ENCODE measurements at regions of chr15 and their contacts with region 1.

Region 1: GRCh38 chr15:57561041-57561711 is 30.5 kb upstream of the MYZAP start:
- DNase-seq: peak in 1 of 2 donors; percentile 70
- ATAC-seq: peak; percentile 93
- H3K4me3 ChIP-seq: no peak overlapping the region
- H3K27ac ChIP-seq: no peak overlapping the region
- H3K4me1 ChIP-seq: no peaks in the 10 kb centered on the region
- H3K27me3 ChIP-seq: no peaks in the 10 kb centered on the region

Region 2: DNA sequence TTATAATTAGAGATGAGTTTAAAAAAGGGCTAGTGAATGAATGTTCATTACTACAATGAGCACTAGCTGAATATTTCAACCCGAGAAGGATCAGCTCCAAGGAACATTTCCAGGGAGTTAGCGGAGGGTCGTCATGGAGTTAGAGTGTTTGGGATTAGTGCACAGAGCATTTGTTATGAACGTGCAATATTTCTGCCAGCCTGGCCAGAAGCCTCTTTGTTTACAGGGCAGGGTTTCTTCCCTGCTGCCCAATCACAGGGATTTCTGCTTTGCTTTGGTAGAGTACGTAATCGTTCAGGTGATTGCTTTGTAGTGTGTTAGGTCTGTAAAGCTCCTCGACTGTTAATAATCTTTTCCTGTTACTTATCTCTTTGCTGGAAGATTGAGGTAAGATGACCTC is 179.0 kb before region 1 on chr15:
- intact Hi-C with region 1: no loop called
- DNase-seq: no peak
- ATAC-seq: no peak
- H3K4me3 ChIP-seq: no peak overlapping the region
- H3K27ac ChIP-seq: no peak overlapping the region
- H3K4me1 ChIP-seq: peaks cover 0 to 2% of the 10 kb centered on the region in 2 donors
- H3K27me3 ChIP-seq: no peaks in the 10 kb centered on the region

Region 3: GRCh38 chr15:57611938-57612337 is 50.8 kb after region 1 on chr15:
- intact Hi-C with region 1: loop called in 1 of 2 experiments (anchors 1 kb)
- DNase-seq: peak in 1 of 2 donors; percentile 53
- ATAC-seq: peak; percentile 67
- H3K4me3 ChIP-seq: no peak overlapping the region
- H3K27ac ChIP-seq: peak overlapping the region in 1 of 2 donors; percentile 6
- H3K4me1 ChIP-seq: no peaks in the 10 kb centered on the region
- H3K27me3 ChIP-seq: no peaks in the 10 kb centered on the region

Region 4: GRCh38 chr15:57635300-57635909 is 74.2 kb after region 1 on chr15:
- intact Hi-C with region 1: loop called (anchors 2 kb)
- DNase-seq: no peak
- ATAC-seq: peak; percentile 61
- H3K4me3 ChIP-seq: no peak overlapping the region
- H3K27ac ChIP-seq: peak overlapping the region; percentile 34 to 50
- H3K4me1 ChIP-seq: peaks cover 0 to 3% of the 10 kb centered on the region in 2 donors
- H3K27me3 ChIP-seq: no peaks in the 10 kb centered on the region

Region 5: GRCh38 chr15:57732526-57733331 is 171.6 kb after region 1 on chr15:
- intact Hi-C with region 1: loop called in 1 of 2 experiments (anchors 10 kb)
- DNase-seq: no peak
- ATAC-seq: no peak
- H3K4me3 ChIP-seq: no peak overlapping the region
- H3K27ac ChIP-seq: no peak overlapping the region
- H3K4me1 ChIP-seq: no peaks in the 10 kb centered on the region
- H3K27me3 ChIP-seq: no peaks in the 10 kb centered on the region

Region 6: GRCh38 chr15:57861036-57861638 is 300.0 kb after region 1 on chr15:
- intact Hi-C with region 1: loop called (anchors 2 kb)
- DNase-seq: no peak
- ATAC-seq: peak; percentile 71
- H3K4me3 ChIP-seq: no peak overlapping the region
- H3K27ac ChIP-seq: no peak overlapping the region
- H3K4me1 ChIP-seq: no peaks in the 10 kb centered on the region
- H3K27me3 ChIP-seq: no peaks in the 10 kb centered on the region

Region 7: DNA sequence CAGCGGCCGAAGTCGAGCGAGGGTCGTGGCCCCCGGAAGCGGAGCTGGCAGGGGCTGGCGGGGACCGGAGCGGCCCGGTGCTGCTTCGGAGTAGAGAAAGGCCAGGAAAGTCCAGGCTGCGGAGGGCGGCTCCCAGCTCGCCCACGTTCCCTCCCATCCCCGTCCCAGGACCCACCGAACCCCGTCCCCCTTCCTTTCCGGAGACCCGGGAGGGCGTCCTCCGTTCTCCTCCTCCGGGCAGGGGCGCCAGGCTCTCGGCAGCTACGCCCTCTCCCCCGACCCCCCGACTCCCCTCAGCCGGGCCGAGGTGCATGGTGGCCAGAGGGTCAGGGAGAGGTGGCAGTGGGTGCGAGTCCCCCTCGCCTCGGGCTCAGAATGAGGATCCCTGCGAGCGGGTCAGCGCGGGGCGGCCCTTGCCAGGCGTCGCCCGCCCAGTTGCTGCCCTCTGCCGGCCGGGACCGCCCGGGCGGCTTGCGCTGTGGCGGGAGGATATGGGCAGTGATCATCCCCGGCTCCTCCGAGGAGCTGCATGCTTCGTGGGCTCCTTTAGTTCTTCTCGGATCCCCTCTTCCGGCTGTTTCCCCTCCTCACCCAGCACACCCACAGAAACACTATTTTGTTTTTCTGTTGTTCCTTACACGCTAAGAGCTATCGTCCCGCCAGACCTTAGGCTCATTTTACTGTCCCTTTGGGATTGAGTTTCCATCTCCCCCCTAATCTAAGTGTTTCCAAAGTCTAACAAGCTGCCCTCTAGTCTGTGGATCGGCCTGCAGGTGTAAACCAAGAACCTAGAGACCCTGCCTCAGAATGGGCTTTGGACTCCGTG is 505.1 kb after region 1 on chr15:
- intact Hi-C with region 1: loop called (anchors 5 to 10 kb)
- DNase-seq: peak; percentile 75 to 88
- ATAC-seq: peak; percentile 92
- H3K4me3 ChIP-seq: peak overlapping the region in 1 of 2 donors; percentile 23
- H3K27ac ChIP-seq: no peak overlapping the region
- H3K4me1 ChIP-seq: no peaks in the 10 kb centered on the region
- H3K27me3 ChIP-seq: no peaks in the 10 kb centered on the region

Region 8: DNA sequence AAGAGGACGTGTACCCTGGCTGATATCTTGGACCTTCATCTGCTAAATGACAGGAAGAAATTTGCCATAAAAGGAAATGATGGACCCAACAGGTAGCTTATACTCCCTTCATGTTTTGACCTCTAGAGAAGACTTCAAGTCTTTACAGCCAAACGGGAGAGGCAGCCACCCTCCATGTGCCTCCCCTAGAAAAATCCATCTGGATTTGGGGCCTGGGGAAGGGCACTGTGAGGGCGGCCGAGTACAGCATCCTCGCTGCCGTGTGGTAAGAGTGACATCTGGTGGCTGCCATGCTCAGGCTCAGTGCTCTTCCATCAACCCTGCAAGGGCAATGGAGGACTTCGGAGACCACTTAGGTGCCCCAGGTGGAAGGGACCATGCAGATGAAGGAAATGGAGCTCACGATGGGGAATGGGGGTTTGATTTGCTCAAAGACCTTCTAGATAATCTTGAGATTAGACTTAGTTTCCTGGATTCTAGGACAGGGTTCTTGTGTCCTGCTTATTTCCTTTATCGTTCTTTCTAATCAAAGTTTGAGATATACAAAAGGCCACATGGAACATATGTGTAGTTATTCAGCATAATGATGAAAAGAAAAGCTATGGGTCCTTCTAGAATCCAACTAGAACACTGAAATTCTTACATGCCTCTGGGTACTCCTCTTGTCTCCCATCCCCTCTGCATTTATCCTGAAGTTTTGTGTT is 621.4 kb after region 1 on chr15:
- intact Hi-C with region 1: loop called in 1 of 2 experiments (anchors 10 kb)
- DNase-seq: peak; percentile 60 to 79
- ATAC-seq: peak; percentile 79
- H3K4me3 ChIP-seq: no peak overlapping the region
- H3K27ac ChIP-seq: no peak overlapping the region
- H3K4me1 ChIP-seq: no peaks in the 10 kb centered on the region
- H3K27me3 ChIP-seq: no peaks in the 10 kb centered on the region